CD8-positive, alpha-beta memory T cell (primary cell): ENCODE measurements at regions of chr1 and their contacts with region 1.

Region 1: GRCh38 chr1:158203693-158204457 is 23.2 kb downstream of the CD1D start:
- DNase-seq: peak in 2 of 5 donors; percentile 19 to 36
- H3K4me3 ChIP-seq: no peak overlapping the region
- H3K4me3 Mint-ChIP-seq: peak overlapping the region in 1 of 7 donors; percentile 56
- H3K27ac ChIP-seq: no peak overlapping the region
- H3K27ac Mint-ChIP-seq: no peak overlapping the region
- H3K4me1 ChIP-seq: peaks cover 8% of the 10 kb centered on the region
- H3K4me1 Mint-ChIP-seq: peaks cover 10 to 13% (median 13%) of the 10 kb centered on the region in 3 donors
- H3K27me3 ChIP-seq: no peaks in the 10 kb centered on the region
- H3K27me3 Mint-ChIP-seq: peaks cover 9 to 31% of the 10 kb centered on the region in 2 donors

Region 2: GRCh38 chr1:158185770-158186705 is 17.8 kb before region 1 on chr1:
- CTCF ChIA-PET with region 1: interaction called, 14 read pairs
- POLR2A ChIA-PET with region 1: no interaction called
- DNase-seq: no peak
- H3K4me3 ChIP-seq: no peak overlapping the region
- H3K4me3 Mint-ChIP-seq: no peak overlapping the region
- H3K27ac ChIP-seq: no peak overlapping the region
- H3K27ac Mint-ChIP-seq: no peak overlapping the region
- H3K4me1 ChIP-seq: no peaks in the 10 kb centered on the region
- H3K4me1 Mint-ChIP-seq: peaks cover 7 to 10% (median 10%) of the 10 kb centered on the region in 3 donors
- H3K27me3 ChIP-seq: peaks cover 19% of the 10 kb centered on the region
- H3K27me3 Mint-ChIP-seq: peaks cover 23 to 62% of the 10 kb centered on the region in 2 donors

Region 3: DNA sequence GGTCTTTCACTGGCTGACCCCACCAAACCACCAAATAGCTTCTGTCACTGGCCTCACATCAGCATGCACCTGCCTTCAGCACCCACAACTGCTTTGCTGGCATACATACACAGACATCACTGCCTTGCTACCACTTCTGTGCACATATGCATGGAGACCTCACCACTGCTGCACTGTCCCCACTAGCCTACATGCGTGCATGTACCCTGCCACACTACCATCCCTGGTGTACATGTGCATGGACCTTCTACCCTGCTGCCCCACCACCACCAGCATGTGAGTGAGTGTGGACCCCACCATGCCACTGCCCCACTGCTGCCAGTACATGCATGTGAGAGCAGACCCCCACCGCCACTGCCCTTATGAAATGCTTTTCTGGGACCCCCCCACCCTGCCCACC is 91.9 kb after region 1 on chr1:
- CTCF ChIA-PET with region 1: no interaction called
- POLR2A ChIA-PET with region 1: no interaction called
- DNase-seq: no peak
- H3K4me3 ChIP-seq: no peak overlapping the region
- H3K4me3 Mint-ChIP-seq: no peak overlapping the region
- H3K27ac ChIP-seq: no peak overlapping the region
- H3K27ac Mint-ChIP-seq: no peak overlapping the region
- H3K4me1 ChIP-seq: no peaks in the 10 kb centered on the region
- H3K4me1 Mint-ChIP-seq: no peaks in the 10 kb centered on the region
- H3K27me3 ChIP-seq: no peaks in the 10 kb centered on the region
- H3K27me3 Mint-ChIP-seq: peaks cover 20 to 36% of the 10 kb centered on the region in 2 donors

Region 4: GRCh38 chr1:158329733-158330132 is 125.9 kb after region 1 on chr1:
- CTCF ChIA-PET with region 1: interaction called, 12 read pairs
- POLR2A ChIA-PET with region 1: no interaction called
- DNase-seq: no peak
- H3K4me3 ChIP-seq: no peak overlapping the region
- H3K4me3 Mint-ChIP-seq: no peak overlapping the region
- H3K27ac ChIP-seq: no peak overlapping the region
- H3K27ac Mint-ChIP-seq: no peak overlapping the region
- H3K4me1 ChIP-seq: no peaks in the 10 kb centered on the region
- H3K4me1 Mint-ChIP-seq: peaks cover 9 to 15% (median 12%) of the 10 kb centered on the region in 3 donors
- H3K27me3 ChIP-seq: no peaks in the 10 kb centered on the region
- H3K27me3 Mint-ChIP-seq: peaks cover 2 to 26% of the 10 kb centered on the region in 2 donors

Region 5: GRCh38 chr1:159071970-159072582 is 868.2 kb after region 1 on chr1:
- CTCF ChIA-PET with region 1: interaction called, 32 read pairs
- POLR2A ChIA-PET with region 1: no interaction called
- DNase-seq: peak in 2 of 5 donors; percentile 19 to 31
- H3K4me3 ChIP-seq: no peak overlapping the region
- H3K4me3 Mint-ChIP-seq: peak overlapping the region in 1 of 7 donors; percentile 14
- H3K27ac ChIP-seq: no peak overlapping the region
- H3K27ac Mint-ChIP-seq: peak overlapping the region in 3 of 8 donors; percentile 6 to 72 (median 58)
- H3K4me1 ChIP-seq: peaks cover 37% of the 10 kb centered on the region
- H3K4me1 Mint-ChIP-seq: peaks cover 42 to 66% (median 59%) of the 10 kb centered on the region in 3 donors
- H3K27me3 ChIP-seq: no peaks in the 10 kb centered on the region
- H3K27me3 Mint-ChIP-seq: no peaks in the 10 kb centered on the region